Activated CD4-positive, alpha-beta T cell treated with anti-CD3 and anti-CD28 coated beads, Interleukin-2, amount 10 ng/mL, durations not matched to agents 7 days and 5 days (primary cell): ENCODE measurements at regions of chr17 and their contacts with region 1.

Region 1: GRCh38 chr17:66331038-66331816 is 28.8 kb downstream of the PRKCA start:
- DNase-seq: peak; percentile 55
- H3K4me3 Mint-ChIP-seq: peak overlapping the region; percentile 63
- H3K27ac Mint-ChIP-seq: peak overlapping the region; percentile 94
- H3K4me1 Mint-ChIP-seq: peaks cover 83% of the 10 kb centered on the region
- H3K27me3 Mint-ChIP-seq: no peaks in the 10 kb centered on the region

Region 2: DNA sequence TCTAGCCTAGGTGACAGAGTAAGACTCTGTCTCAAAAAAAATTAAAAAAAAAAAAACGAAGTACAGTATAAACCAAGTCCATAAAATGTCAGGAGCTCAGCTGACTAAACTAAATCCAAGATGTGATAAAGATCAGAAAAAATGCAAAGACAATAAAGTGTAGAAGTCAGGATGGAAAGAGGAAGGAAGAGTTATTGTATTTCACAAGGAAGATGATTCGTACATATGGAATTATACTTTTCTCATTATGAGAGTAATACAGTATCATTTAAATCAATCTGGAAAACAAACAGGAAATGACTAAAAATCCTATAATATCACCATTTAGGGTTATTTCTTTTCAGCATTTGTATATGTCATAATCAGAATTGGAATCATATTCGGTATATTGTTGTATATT is 90.6 kb before region 1 on chr17:
- CTCF ChIA-PET with region 1: no interaction called
- POLR2A ChIA-PET with region 1: no interaction called
- DNase-seq: no peak
- H3K4me3 Mint-ChIP-seq: no peak overlapping the region
- H3K27ac Mint-ChIP-seq: no peak overlapping the region
- H3K4me1 Mint-ChIP-seq: peaks cover 8% of the 10 kb centered on the region
- H3K27me3 Mint-ChIP-seq: no peaks in the 10 kb centered on the region

Region 3: DNA sequence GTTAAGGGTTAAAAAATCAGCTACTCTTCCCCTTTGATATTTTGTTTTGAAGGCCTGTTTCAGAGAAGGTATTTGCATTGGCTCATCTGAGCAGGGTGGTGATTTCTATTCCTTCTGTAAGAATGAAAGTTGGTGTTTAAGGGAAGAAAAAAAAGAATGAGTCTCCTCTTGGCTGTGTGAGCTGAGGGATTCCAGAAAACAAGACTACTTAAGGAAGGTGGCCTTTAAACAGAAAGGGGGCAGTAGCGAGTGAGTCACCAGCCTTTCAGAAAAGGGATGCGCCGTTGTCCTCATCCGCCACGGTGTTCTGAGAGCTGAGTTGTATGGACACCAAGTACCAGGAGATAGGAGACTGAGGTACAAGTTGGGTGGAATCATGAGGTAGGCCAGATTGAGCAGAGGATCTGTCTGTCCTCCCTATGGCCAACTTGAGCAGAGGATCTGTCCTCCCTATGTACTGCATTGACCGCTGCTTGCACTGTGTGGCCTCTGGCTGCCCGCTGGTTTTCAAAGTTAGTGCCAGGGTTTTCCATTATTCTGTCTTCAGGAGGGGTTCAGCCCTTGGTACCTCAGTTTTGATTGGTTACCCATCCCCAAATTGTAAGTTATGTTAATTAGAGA is 20.6 kb before region 1 on chr17:
- CTCF ChIA-PET with region 1: interaction called, 12 read pairs
- POLR2A ChIA-PET with region 1: no interaction called
- DNase-seq: no peak
- H3K4me3 Mint-ChIP-seq: peak overlapping the region; percentile 12
- H3K27ac Mint-ChIP-seq: peak overlapping the region; percentile 70
- H3K4me1 Mint-ChIP-seq: peaks cover 89% of the 10 kb centered on the region
- H3K27me3 Mint-ChIP-seq: no peaks in the 10 kb centered on the region

Region 4: GRCh38 chr17:66343531-66344078 is 12.4 kb after region 1 on chr17:
- CTCF ChIA-PET with region 1: interaction called, 22 read pairs
- POLR2A ChIA-PET with region 1: no interaction called
- DNase-seq: no peak
- H3K4me3 Mint-ChIP-seq: no peak overlapping the region
- H3K27ac Mint-ChIP-seq: no peak overlapping the region
- H3K4me1 Mint-ChIP-seq: peaks cover 49% of the 10 kb centered on the region
- H3K27me3 Mint-ChIP-seq: no peaks in the 10 kb centered on the region